CD8-positive, alpha-beta memory T cell (primary cell): ENCODE measurements at regions of chrX and their contacts with region 1.

Region 1: GRCh38 chrX:24024819-24025740 is 1.9 kb downstream of the KLHL15 start:
- DNase-seq: peak; percentile 70 to 84 (median 79)
- H3K4me3 ChIP-seq: peak overlapping the region; percentile 78
- H3K4me3 Mint-ChIP-seq: peak overlapping the region; percentile 77 to 95 (median 90)
- H3K27ac ChIP-seq: peak overlapping the region; percentile 84
- H3K27ac Mint-ChIP-seq: peak overlapping the region in 7 of 8 donors; percentile 74 to 96 (median 90)
- H3K4me1 ChIP-seq: peaks cover 15% of the 10 kb centered on the region
- H3K4me1 Mint-ChIP-seq: peaks cover 26 to 34% (median 32%) of the 10 kb centered on the region in 3 donors
- H3K27me3 ChIP-seq: no peaks in the 10 kb centered on the region
- H3K27me3 Mint-ChIP-seq: peaks cover 0 to 24% of the 10 kb centered on the region in 2 donors

Region 2: DNA sequence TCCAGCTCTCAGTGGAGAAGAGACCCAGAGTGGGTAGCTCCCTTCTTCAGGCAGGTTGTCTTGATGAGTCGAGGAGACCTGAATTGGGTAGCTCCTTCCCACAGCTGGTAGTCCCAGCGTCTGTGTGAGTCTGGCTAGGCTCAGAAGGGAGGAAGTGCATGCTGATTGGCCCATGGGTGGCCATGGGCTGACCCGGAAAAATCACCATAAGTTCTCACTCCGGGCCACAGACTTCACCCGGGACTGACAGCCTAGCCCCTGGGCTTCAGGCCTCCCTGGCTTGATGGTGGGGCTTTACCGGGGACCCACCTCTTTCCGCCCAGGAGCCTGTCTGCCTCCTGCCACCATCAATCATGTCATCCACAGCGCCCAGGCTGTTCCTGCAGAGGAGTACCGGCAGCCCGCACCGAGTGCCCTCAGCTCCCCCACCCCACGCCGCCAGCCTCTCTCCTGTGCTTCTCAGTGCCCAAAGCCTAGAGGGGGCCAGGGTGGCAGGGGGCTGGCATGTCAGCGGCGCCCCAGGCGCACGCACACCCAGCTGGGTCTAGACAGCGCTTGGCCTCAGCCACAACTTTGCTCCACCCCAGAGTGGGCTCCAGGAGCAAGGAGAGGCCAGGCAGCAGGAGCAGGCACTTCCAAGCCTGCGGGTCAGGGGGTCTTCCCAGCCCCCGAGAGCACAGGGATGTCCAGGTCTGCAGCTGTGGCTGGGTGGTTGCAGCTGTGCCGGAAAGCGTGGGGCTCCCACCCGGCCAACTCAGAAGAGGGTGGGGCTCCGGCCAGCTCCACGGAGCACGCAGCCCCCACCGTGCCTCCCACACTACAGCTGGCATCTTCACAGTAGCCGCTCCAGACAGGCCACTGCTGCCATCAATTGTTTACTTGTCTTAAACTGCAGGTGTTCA is 258.2 kb before region 1 on chrX:
- CTCF ChIA-PET with region 1: no interaction called
- POLR2A ChIA-PET with region 1: no interaction called
- DNase-seq: no peak
- H3K4me3 ChIP-seq: no peak overlapping the region
- H3K4me3 Mint-ChIP-seq: peak overlapping the region in 6 of 7 donors; percentile 48 to 83 (median 70)
- H3K27ac ChIP-seq: no peak overlapping the region
- H3K27ac Mint-ChIP-seq: peak overlapping the region in 3 of 8 donors; percentile 21 to 83 (median 66)
- H3K4me1 ChIP-seq: no peaks in the 10 kb centered on the region
- H3K4me1 Mint-ChIP-seq: peaks cover 0 to 4% (median 0%) of the 10 kb centered on the region in 3 donors
- H3K27me3 ChIP-seq: no peaks in the 10 kb centered on the region
- H3K27me3 Mint-ChIP-seq: peaks cover 0 to 4% of the 10 kb centered on the region in 2 donors

Region 3: GRCh38 chrX:23907498-23908218 is 117.4 kb before region 1 on chrX and contains the starts of genes APOO and CXorf58:
- CTCF ChIA-PET with region 1: interaction called, 3 read pairs
- POLR2A ChIA-PET with region 1: interaction called, 18 read pairs
- DNase-seq: peak; percentile 83 to 94 (median 91)
- H3K4me3 ChIP-seq: peak within 1 kb of the TSS; percentile 50
- H3K4me3 Mint-ChIP-seq: peak within 1 kb of the TSS; percentile 80 to 91 (median 83)
- H3K27ac ChIP-seq: peak within 1 kb of the TSS; percentile 87
- H3K27ac Mint-ChIP-seq: peak within 1 kb of the TSS; percentile 72 to 97 (median 92)
- H3K4me1 ChIP-seq: peaks cover 10% of the 10 kb centered on the region
- H3K4me1 Mint-ChIP-seq: peaks cover 8 to 15% (median 10%) of the 10 kb centered on the region in 3 donors
- H3K27me3 ChIP-seq: no peaks in the 10 kb centered on the region
- H3K27me3 Mint-ChIP-seq: peaks cover 0 to 3% of the 10 kb centered on the region in 2 donors
- total RNA-seq, gene APOO: 38.3 to 42.6 TPM
- total RNA-seq, gene CXorf58: 0.11 TPM in 1 of 2 experiments, not detected in the other